Left cardiac atrium (tissue), 4 donors: ENCODE measurements at regions of chr6 and their contacts with region 1.

Region 1: DNA sequence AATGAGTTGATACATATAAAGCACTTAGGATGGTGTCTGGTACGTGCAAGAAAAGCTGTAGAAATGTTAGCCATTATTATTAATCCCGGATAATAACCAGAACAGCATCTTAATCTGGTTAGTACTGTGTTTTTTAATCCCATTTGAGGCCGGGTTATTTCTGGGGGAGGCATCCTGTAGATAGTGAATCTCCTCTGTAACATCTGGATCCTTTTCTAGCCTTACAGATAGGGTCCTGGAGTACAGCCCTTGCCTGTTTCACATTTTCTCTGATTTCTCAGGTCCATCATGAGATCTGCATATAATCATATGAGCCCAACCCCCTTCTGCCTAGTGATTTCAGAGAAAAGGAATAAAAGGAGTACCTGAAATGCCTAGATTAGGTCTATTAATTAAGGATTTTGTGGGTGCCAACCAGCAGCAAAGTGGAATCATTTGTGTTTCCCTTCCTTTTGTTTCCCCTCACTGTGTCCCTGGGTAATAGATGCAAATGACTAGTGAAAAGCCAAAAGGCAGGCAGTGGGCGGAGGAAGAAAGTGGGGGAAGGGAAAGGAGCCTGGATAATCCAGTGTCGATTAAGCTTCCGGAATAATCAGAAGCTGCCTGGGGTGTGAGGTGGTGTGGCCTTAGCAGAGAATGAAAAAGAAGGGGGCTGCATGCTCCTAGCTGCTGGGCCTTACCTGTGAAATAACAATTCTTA is 88.9 kb downstream of the SOBP start:
- DNase-seq: no peak
- ATAC-seq: no peak

Region 2: GRCh38 chr6:107556082-107556481 is 22.7 kb before region 1 on chr6:
- intact Hi-C with region 1: loop called in 1 of 2 experiments (anchors 2 kb)
- DNase-seq: no peak
- ATAC-seq: no peak

Region 3: GRCh38 chr6:108331982-108332381 is 753.2 kb after region 1 on chr6:
- intact Hi-C with region 1: no loop called
- DNase-seq: no peak
- ATAC-seq: no peak

Region 4: DNA sequence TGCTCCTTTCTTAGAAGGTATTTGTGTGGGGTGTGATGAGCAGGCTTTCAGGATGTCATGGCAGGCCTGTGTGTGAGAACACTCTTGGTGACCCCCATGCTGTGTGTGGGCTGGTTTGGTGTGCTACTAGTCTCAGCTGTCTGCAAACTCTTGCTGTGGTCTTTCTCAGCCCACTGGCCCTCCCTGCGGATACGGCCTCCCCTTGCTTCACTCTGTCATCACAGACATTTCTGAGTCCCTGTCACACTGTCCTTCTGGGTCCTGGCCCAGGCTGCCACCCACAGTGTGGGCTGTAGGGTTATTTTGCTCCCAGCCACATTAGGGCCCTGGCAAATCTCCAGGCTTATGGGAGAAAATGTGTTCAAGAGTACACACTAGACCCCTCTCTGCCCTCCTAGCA is 1230.4 kb after region 1 on chr6:
- intact Hi-C with region 1: no loop called
- DNase-seq: no peak
- ATAC-seq: no peak